ENCODE measurements at regions of chr12 and their contacts with region 1.

Region 1: GRCh38 chr12:50084775-50085614 is at the start of gene SMARCD1:
- DNase-seq: peak; percentile 70 to 93 (median 84)
- ATAC-seq: peak; percentile 83
- H3K4me3 ChIP-seq: peak within 1 kb of the TSS; percentile 95
- H3K4me3 Mint-ChIP-seq: peak within 1 kb of the TSS; percentile 96
- H3K27ac ChIP-seq: peak within 1 kb of the TSS; percentile 82 to 95
- H3K27ac Mint-ChIP-seq: peak within 1 kb of the TSS; percentile 99
- H3K4me1 ChIP-seq: peaks cover 21% of the 10 kb centered on the region
- H3K4me1 Mint-ChIP-seq: peaks cover 43% of the 10 kb centered on the region
- H3K27me3 ChIP-seq: no peaks in the 10 kb centered on the region
- H3K27me3 Mint-ChIP-seq: no peaks in the 10 kb centered on the region
- CTCF ChIP-seq: peak; percentile 45
- total RNA-seq, gene SMARCD1: 78.9 to 80.0 TPM

Region 2: GRCh38 chr12:49893753-49894752 is 190.9 kb before region 1 on chr12:
- CTCF ChIA-PET with region 1: no interaction called
- POLR2A ChIA-PET with region 1: no interaction called
- intact Hi-C with region 1: no loop called
- DNase-seq: no peak
- ATAC-seq: no peak
- H3K4me3 ChIP-seq: no peak overlapping the region
- H3K4me3 Mint-ChIP-seq: no peak overlapping the region
- H3K27ac ChIP-seq: no peak overlapping the region
- H3K27ac Mint-ChIP-seq: no peak overlapping the region
- H3K4me1 ChIP-seq: peaks cover 10% of the 10 kb centered on the region
- H3K4me1 Mint-ChIP-seq: no peaks in the 10 kb centered on the region
- H3K27me3 ChIP-seq: peaks cover 0 to 3% of the 10 kb centered on the region in 2 experiments
- H3K27me3 Mint-ChIP-seq: no peaks in the 10 kb centered on the region
- CTCF ChIP-seq: no peak

Region 3: DNA sequence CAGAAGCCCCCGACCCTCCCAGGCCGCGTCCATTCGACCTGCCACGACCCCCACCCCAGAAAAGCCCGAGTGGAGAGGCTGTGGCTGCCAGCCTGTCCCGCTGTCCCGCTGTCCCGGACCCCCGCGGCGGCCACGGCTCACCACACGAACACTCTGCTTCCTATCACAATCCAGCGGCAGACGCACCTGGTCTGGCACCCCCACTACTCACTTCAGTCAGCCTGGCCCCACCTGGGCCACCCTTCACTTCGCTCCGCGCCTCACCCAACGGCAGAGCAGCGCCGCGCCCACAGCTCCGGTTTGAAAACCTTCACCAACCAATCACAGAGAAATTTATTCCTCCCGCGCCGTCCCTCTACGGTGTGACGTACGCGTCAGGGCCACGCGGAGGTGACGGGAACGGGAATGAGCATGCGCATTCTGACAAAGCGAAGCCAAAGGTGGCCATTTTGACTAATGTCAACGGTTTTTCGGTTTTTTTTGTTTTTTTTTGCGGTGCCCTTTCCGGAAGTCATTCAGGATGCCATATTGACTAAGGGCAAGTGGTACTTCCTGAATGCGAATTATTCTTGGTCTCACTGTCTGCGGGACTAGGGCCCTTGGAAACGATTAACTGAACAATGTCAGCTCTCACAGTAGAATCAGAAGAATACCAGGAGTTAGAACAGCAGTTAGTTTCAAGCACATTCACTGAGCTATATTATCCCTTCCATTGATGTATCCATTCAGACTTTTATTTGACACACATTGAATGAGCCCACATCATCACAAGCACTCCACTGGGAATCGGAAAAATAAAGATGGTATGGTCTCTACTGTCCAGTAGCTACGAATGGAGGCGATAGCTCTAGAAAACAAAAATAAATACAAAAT is 59.6 kb before region 1 on chr12 and contains the start of gene RACGAP1:
- CTCF ChIA-PET with region 1: interaction called, 6 read pairs
- POLR2A ChIA-PET with region 1: interaction called, 8 read pairs
- intact Hi-C with region 1: loop called in 1 of 2 experiments (anchors 1 kb)
- DNase-seq: peak; percentile 88 to 99 (median 94)
- ATAC-seq: peak; percentile 97
- H3K4me3 ChIP-seq: peak within 1 kb of the TSS; percentile 75
- H3K4me3 Mint-ChIP-seq: peak within 1 kb of the TSS; percentile 94
- H3K27ac ChIP-seq: peak within 1 kb of the TSS; percentile 16 to 28
- H3K27ac Mint-ChIP-seq: peak within 1 kb of the TSS; percentile 66
- H3K4me1 ChIP-seq: peaks cover 18% of the 10 kb centered on the region
- H3K4me1 Mint-ChIP-seq: peaks cover 15% of the 10 kb centered on the region
- H3K27me3 ChIP-seq: no peaks in the 10 kb centered on the region
- H3K27me3 Mint-ChIP-seq: peaks cover 13% of the 10 kb centered on the region
- CTCF ChIP-seq: no peak
- total RNA-seq, gene RACGAP1: 3.0 to 3.3 TPM

Region 4: GRCh38 chr12:50167041-50167828 is 82.2 kb after region 1 on chr12 and contains the start of gene CERS5:
- CTCF ChIA-PET with region 1: interaction called, 8 read pairs
- POLR2A ChIA-PET with region 1: interaction called, 28 read pairs
- intact Hi-C with region 1: loop called in 1 of 2 experiments (anchors 2 kb)
- DNase-seq: peak; percentile 91 to 99 (median 94)
- ATAC-seq: peak; percentile 96
- H3K4me3 ChIP-seq: peak within 1 kb of the TSS; percentile 84
- H3K4me3 Mint-ChIP-seq: peak within 1 kb of the TSS; percentile 95
- H3K27ac ChIP-seq: peak within 1 kb of the TSS; percentile 85
- H3K27ac Mint-ChIP-seq: peak within 1 kb of the TSS; percentile 81
- H3K4me1 ChIP-seq: peaks cover 20% of the 10 kb centered on the region
- H3K4me1 Mint-ChIP-seq: peaks cover 34% of the 10 kb centered on the region
- H3K27me3 ChIP-seq: no peaks in the 10 kb centered on the region
- H3K27me3 Mint-ChIP-seq: no peaks in the 10 kb centered on the region
- CTCF ChIP-seq: no peak
- total RNA-seq, gene CERS5: 42.3 to 44.5 TPM

Region 5: DNA sequence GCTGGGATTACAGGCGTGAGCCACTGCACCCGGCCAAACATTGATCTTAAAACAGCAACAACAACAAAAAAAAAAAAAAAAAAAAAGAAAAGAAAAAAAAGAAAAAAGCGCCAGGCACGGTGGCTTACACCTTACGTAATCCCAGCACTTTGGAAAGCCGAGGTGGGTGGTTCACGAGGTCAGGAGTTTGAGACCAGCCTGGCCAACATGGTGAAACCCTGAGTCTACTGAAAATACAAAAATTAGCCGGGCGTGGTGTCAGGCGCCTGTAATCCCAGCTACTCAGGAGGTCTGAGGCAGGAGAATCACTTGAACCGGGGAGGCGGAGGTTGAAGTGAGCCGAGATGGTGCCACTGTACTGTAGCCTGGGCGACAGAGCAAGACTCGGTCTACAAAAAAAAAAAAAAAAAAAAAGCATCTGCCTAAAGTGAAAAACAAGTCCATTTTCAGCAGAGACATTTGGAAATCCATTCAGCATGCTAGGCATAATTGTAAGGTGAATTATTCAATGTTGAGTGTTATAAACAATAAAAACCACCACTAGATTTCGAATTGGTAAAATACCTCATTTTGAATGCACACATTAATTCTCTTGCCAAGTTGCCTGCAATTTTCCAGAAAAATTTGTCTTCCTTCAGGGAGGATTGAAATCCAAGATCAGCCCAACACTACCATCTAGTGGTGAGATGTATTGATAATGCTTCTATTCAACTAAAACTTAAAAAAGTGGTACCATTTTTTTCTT is 90.1 kb after region 1 on chr12:
- CTCF ChIA-PET with region 1: interaction called, 4 read pairs
- POLR2A ChIA-PET with region 1: interaction called, 4 read pairs
- intact Hi-C with region 1: loop called in 1 of 2 experiments (anchors 1 kb)
- DNase-seq: peak in 5 of 14 experiments; percentile 8 to 81 (median 69)
- ATAC-seq: peak; percentile 57
- H3K4me3 ChIP-seq: no peak overlapping the region
- H3K4me3 Mint-ChIP-seq: no peak overlapping the region
- H3K27ac ChIP-seq: no peak overlapping the region
- H3K27ac Mint-ChIP-seq: no peak overlapping the region
- H3K4me1 ChIP-seq: no peaks in the 10 kb centered on the region
- H3K4me1 Mint-ChIP-seq: no peaks in the 10 kb centered on the region
- H3K27me3 ChIP-seq: no peaks in the 10 kb centered on the region
- H3K27me3 Mint-ChIP-seq: no peaks in the 10 kb centered on the region
- CTCF ChIP-seq: peak; percentile 90

Region 6: GRCh38 chr12:50400598-50401364 is 315.8 kb after region 1 on chr12 and contains the start of gene LARP4:
- CTCF ChIA-PET with region 1: no interaction called
- POLR2A ChIA-PET with region 1: interaction called, 3 read pairs
- intact Hi-C with region 1: loop called in 1 of 2 experiments (anchors 2 kb)
- DNase-seq: peak; percentile 79 to 94 (median 85)
- ATAC-seq: peak; percentile 94
- H3K4me3 ChIP-seq: peak within 1 kb of the TSS; percentile 91
- H3K4me3 Mint-ChIP-seq: peak within 1 kb of the TSS; percentile 94
- H3K27ac ChIP-seq: peak within 1 kb of the TSS; percentile 65 to 70
- H3K27ac Mint-ChIP-seq: peak within 1 kb of the TSS; percentile 80
- H3K4me1 ChIP-seq: peaks cover 15% of the 10 kb centered on the region
- H3K4me1 Mint-ChIP-seq: peaks cover 30% of the 10 kb centered on the region
- H3K27me3 ChIP-seq: no peaks in the 10 kb centered on the region
- H3K27me3 Mint-ChIP-seq: peaks cover 11% of the 10 kb centered on the region
- CTCF ChIP-seq: peak; percentile 10
- total RNA-seq, gene LARP4: 17.6 to 18.1 TPM